Transverse colon (tissue), 4 donors: ENCODE measurements at regions of chr11 and their contacts with region 1.

Region 1: DNA sequence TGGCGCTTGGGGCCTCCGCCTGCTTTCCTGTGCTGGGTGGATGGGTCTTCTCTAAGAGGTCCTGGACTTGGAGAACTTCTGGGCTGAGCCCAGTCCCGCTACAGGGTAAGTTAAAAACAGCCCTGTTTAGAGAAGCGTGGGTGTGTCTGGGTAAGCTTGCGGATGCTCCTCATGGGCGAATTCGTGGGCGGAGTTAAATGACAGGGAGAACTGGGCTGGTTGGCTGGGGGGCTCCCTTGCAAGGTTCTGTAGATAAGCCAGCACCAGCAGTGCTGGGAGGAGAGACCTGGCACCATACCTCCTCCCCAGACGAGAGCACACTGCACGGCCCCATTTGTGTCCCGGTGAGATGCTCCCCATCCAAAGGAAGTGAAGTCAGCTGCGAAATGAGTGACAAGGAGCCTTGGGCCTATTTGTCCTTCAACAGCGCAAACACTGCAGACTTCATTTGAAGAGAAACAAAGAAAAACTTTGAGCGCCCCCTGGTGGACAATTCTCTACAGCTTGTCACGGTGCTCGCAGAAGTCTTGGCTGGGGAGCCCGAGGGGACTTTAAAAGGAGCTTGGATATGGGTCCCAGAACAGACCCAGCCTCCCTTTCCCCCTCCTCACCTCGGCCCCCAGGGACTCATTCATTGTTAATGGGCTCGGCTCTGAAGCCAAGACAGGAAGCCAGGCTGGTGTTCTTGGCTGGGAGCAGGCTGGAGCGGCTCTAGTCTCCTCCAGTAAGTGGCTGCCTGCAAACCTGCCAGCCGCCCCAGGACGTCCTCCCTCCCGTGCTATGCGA is 39.5 kb downstream of the TP53I11 start:
- DNase-seq: peak; percentile 87
- H3K4me3 ChIP-seq: no peak overlapping the region
- H3K27ac ChIP-seq: no peak overlapping the region
- H3K4me1 ChIP-seq: peaks cover 0 to 19% (median 0%) of the 10 kb centered on the region in 4 donors
- H3K27me3 ChIP-seq: no peaks in the 10 kb centered on the region
- CTCF ChIP-seq: peak; percentile 80 to 93 (median 84)
- EP300 ChIP-seq: no peak
- POLR2A ChIP-seq: no peak

Region 2: DNA sequence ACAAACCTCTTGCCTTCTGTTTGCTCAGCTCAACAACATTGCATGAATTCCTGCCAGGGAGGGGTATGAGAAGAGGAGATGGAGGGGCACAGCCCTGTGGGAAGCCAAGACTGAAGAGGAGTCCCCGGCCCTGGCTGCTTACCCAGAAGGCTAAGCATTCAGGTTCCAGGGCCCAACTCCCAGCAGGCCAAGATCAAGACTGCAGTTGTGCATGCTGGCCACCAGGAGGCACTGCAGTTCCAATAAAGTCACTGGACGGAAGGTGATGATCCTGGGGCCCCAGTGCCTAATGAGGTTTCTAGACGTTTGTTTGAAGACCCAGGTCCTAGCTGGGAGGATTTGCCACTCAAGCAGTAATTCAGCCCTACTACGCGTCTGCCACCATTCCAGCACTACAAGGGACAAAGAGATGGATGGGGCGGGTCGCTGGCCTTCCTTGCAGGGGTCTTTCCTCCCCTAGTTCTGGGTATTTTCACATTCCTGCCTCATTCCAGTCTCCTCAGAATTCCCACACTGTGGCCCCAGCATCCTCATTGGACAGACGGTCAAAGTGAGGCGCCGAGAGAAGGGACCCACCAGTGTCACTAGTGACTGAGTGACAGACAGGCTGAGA is 624.8 kb before region 1 on chr11:
- in situ Hi-C with region 1: loop called in 1 of 4 experiments (anchors 25 kb)
- intact Hi-C with region 1: no loop called
- DNase-seq: peak; percentile 41
- H3K4me3 ChIP-seq: no peak overlapping the region
- H3K27ac ChIP-seq: no peak overlapping the region
- H3K4me1 ChIP-seq: no peaks in the 10 kb centered on the region
- H3K27me3 ChIP-seq: peaks cover 5% of the 10 kb centered on the region
- CTCF ChIP-seq: peak; percentile 88 to 95 (median 93)
- EP300 ChIP-seq: no peak
- POLR2A ChIP-seq: no peak

Region 3: GRCh38 chr11:44709966-44710365 is 201.3 kb before region 1 on chr11:
- in situ Hi-C with region 1: loop called in 1 of 4 experiments (anchors 25 kb)
- intact Hi-C with region 1: no loop called
- DNase-seq: no peak
- H3K4me3 ChIP-seq: no peak overlapping the region
- H3K27ac ChIP-seq: no peak overlapping the region
- H3K4me1 ChIP-seq: no peaks in the 10 kb centered on the region
- H3K27me3 ChIP-seq: no peaks in the 10 kb centered on the region
- CTCF ChIP-seq: no peak
- EP300 ChIP-seq: no peak
- POLR2A ChIP-seq: no peak

Region 4: GRCh38 chr11:44858796-44859527 is 52.3 kb before region 1 on chr11:
- in situ Hi-C with region 1: no loop called
- intact Hi-C with region 1: no loop called
- DNase-seq: no peak
- H3K4me3 ChIP-seq: no peak overlapping the region
- H3K27ac ChIP-seq: peak overlapping the region in 3 of 4 donors; percentile 1 to 91 (median 49)
- H3K4me1 ChIP-seq: peaks cover 11 to 20% (median 14%) of the 10 kb centered on the region in 4 donors
- H3K27me3 ChIP-seq: no peaks in the 10 kb centered on the region
- CTCF ChIP-seq: no peak
- EP300 ChIP-seq: no peak
- POLR2A ChIP-seq: no peak